Sigmoid colon (tissue), 7 donors: ENCODE measurements at regions of chr11 and their contacts with region 1.

Region 1: DNA sequence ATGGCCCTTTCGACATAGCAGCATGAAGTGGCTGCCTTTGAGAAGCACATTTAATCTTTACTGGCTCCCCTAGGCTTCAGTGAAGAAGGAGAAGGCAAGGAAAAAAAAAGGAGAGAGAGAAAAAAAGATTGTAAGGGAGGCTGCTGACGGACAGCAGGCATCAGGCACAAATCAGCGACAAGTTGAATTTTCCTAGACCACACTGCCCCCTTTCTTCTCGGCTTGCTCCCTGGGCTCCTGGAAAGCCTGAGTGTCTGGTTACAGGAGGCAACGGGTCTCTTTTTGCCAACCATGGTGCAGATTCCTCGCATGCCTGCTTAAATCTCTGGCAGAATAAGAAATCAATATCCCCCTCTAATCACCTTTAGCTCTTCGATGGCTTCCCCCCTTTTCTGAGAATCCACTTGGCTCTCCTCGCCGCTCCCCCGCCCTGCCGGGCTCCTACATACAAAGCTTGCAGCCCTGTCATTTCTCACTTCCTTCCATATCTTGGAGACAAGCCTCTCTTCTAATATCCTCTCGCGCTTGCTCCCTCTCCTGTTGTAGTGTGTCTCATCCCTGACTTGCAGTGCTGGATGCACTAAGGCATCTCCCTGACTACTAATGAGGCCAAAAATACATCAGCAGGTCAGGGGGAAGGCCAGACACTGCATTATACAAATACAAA is 14.3 kb downstream of the BLID start:
- DNase-seq: peak; percentile 89
- H3K4me3 ChIP-seq: peak overlapping the region; percentile 53 to 67 (median 60)
- H3K27ac ChIP-seq: peak overlapping the region; percentile 90 to 95 (median 91)
- H3K4me1 ChIP-seq: peaks cover 0 to 10% (median 8%) of the 10 kb centered on the region in 4 donors
- H3K27me3 ChIP-seq: no peaks in the 10 kb centered on the region
- CTCF ChIP-seq: peak in 3 of 4 experiments; percentile 56 to 76 (median 64)
- EP300 ChIP-seq: peak in 1 of 4 donors; percentile 2
- POLR2A ChIP-seq: no peak

Region 2: GRCh38 chr11:121591405-121592033 is 510.2 kb before region 1 on chr11:
- intact Hi-C with region 1: loop called (anchors 5 kb)
- DNase-seq: peak; percentile 74
- H3K4me3 ChIP-seq: no peak overlapping the region
- H3K27ac ChIP-seq: peak overlapping the region; percentile 1 to 83 (median 76)
- H3K4me1 ChIP-seq: peaks cover 0 to 32% (median 22%) of the 10 kb centered on the region in 4 donors
- H3K27me3 ChIP-seq: no peaks in the 10 kb centered on the region
- CTCF ChIP-seq: peak; percentile 64 to 90 (median 80)
- EP300 ChIP-seq: no peak
- POLR2A ChIP-seq: no peak

Region 3: DNA sequence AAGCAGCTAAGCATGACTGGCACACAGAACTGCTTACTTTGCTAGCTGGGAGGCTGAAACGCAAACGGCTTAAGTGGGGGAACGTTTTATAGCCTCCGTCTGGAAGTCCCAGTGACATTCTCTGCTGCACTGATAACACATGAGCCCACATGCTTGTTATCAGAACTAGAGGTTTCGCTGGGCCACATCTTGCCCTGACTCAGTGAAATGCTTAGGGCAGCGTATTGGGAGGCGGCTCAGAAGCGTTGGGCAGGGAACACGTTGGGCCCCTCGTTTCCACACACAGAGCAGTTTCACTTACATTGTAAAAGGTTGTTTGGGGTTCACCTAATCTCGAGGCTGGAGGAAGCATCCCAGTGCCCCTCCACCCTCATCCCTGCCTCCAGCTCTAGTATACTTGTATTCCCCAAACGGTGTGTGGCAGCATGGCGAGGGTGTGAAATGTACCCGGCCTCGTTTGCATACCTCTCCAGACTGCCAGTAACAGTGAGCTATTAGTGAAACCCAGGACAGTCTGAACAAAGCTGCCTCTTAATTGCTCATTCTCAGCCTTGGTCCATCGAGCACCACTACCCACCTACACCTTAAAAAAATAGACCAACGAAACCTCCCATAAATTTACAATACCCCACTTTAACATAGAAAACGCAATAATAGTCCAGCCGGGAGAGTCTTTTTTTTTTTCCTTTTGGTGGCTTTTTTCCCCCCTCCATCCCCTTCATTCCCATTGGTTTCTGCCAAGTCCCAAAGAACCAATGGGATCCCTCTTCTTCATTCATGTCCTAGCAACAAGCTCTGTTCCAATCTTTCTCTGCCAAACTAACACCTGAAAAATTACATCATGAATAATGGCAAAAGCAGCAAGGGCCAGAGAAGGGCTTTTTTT is 430.2 kb before region 1 on chr11:
- intact Hi-C with region 1: loop called (anchors 5 kb)
- DNase-seq: no peak
- H3K4me3 ChIP-seq: peak overlapping the region in 3 of 4 donors; percentile 8 to 22 (median 16)
- H3K27ac ChIP-seq: peak overlapping the region; percentile 82 to 90 (median 84)
- H3K4me1 ChIP-seq: peaks cover 0 to 43% (median 39%) of the 10 kb centered on the region in 4 donors
- H3K27me3 ChIP-seq: no peaks in the 10 kb centered on the region
- CTCF ChIP-seq: no peak
- EP300 ChIP-seq: no peak
- POLR2A ChIP-seq: no peak

Region 4: GRCh38 chr11:121741761-121742361 is 359.9 kb before region 1 on chr11:
- intact Hi-C with region 1: loop called (anchors 1 kb)
- DNase-seq: peak; percentile 94
- H3K4me3 ChIP-seq: peak overlapping the region in 1 of 4 donors; percentile 7
- H3K27ac ChIP-seq: peak overlapping the region; percentile 82 to 89 (median 86)
- H3K4me1 ChIP-seq: peaks cover 0 to 37% (median 32%) of the 10 kb centered on the region in 4 donors
- H3K27me3 ChIP-seq: no peaks in the 10 kb centered on the region
- CTCF ChIP-seq: no peak
- EP300 ChIP-seq: peak; percentile 57 to 94 (median 82)
- POLR2A ChIP-seq: no peak

Region 5: DNA sequence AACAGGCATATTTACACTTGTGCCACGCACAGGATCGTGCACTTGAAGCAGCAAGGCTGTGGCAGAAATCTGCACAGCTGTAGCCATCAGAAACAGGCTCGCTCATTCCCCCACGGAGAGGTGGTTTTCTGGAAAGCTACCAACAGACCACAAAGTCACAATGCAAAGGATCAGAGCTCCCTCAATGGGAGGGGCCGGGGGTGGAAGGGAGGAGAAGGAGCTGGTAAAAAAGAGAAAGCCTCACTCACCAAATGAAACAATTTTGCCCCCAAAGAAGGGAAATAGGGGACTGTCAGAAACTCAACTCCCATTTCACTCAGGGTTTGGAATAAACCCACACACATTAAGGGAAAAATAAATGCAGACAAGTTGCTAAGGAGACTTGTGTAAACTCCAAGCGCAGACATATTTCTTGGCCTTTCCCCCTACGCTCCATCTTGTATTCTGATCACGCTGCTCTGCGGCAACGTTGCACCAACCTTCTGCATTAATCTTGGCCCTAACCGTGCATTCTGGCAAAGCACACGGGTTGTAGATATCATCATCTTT is 57.5 kb after region 1 on chr11:
- intact Hi-C with region 1: loop called (anchors 5 kb)
- DNase-seq: peak; percentile 64
- H3K4me3 ChIP-seq: peak overlapping the region; percentile 8 to 50 (median 32)
- H3K27ac ChIP-seq: peak overlapping the region; percentile 77 to 86 (median 84)
- H3K4me1 ChIP-seq: peaks cover 0 to 48% (median 31%) of the 10 kb centered on the region in 4 donors
- H3K27me3 ChIP-seq: no peaks in the 10 kb centered on the region
- CTCF ChIP-seq: no peak
- EP300 ChIP-seq: no peak
- POLR2A ChIP-seq: no peak